Activated CD4-positive, alpha-beta T cell treated with anti-CD3 and anti-CD28 coated beads for 36 hours (primary cell): ENCODE measurements at regions of chr11 and their contacts with region 1.

Region 1: DNA sequence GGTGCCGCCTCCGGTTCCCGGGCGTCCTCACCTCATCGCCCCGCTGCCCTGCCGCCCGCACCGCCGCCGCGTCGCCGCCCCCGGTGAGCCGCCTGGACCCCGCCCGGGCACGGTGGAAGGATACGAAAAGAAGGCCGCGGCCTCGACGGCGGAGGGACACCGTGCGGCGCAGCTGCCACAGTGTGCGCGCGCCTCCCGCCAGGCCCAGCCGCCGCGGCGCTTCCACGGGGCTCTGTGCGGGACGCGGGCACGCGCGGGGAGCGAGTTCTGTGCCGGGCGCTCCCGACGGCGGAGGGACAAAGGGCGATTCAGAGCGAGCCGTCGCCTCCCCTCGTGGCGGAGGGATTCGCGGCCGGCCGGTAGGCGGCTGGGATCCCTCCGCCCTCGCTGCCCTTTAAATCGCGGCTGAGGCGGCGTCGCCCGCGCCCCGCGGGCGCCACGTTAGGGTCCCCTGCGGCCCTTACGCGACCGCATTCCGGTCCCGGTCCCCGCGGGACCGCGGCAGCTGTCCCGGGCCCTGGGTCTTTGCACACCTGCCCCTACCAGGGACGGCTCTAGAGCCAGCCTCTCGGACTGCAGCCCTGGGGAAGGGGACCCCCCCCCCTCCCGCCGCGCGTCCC is 569 bp upstream of the KMT5B start:
- DNase-seq: peak; percentile 87
- ATAC-seq: peak; percentile 41
- H3K4me3 Mint-ChIP-seq: peak overlapping the region; percentile 71
- H3K27ac Mint-ChIP-seq: no peak overlapping the region
- H3K4me1 Mint-ChIP-seq: peaks cover 47% of the 10 kb centered on the region
- H3K27me3 Mint-ChIP-seq: peaks cover 2% of the 10 kb centered on the region

Region 2: DNA sequence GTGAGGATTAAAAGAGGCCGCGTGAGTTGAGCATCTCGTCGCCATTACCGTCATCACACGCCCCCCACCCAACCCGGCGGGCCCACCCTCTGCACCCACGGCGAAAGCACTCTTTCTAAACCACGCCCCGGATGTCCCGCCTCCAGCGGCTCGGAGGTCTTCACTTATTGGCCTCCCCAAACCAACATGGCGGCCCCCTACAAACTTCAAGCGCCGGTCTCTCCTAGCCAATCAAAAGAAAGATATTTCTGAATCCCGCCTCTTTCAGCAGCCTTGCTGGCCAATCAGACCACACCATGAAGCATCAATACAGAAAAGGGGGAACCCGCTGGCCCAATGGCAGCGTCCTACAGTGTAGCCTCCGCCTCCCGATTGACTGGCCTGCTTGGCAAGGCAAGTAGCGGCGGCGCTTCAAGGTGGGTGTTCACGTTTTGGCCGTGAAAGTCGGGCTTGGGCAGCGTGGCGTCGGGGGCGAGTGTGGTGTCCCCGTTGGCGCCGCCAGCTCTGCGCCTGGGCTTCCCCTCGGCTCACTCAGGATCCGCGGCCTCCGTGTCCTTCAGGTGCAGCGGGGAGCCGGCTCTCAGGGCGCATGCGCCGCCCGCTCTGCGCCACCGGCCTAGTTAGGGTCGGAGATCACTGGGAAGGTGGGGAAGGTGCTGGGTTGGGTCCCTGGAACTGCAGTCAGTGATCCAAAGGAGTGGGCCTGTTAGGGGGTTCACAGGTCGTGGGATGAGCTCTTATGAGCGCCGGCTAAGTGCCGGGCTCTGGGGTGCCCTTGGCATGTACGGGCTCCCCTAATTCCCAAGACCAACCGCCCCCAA is 183.1 kb before region 1 on chr11 and contains the start of gene NDUFS8:
- CTCF ChIA-PET with region 1: interaction called, 3 read pairs
- POLR2A ChIA-PET with region 1: no interaction called
- intact Hi-C with region 1: loop called in 1 of 2 experiments (anchors 1 kb)
- DNase-seq: peak; percentile 97
- ATAC-seq: peak; percentile 99
- H3K4me3 Mint-ChIP-seq: peak within 1 kb of the TSS; percentile 96
- H3K27ac Mint-ChIP-seq: peak within 1 kb of the TSS; percentile 95
- H3K4me1 Mint-ChIP-seq: peaks cover 26% of the 10 kb centered on the region
- H3K27me3 Mint-ChIP-seq: no peaks in the 10 kb centered on the region
- total RNA-seq, gene NDUFS8: 108 to 113 TPM

Region 3: GRCh38 chr11:68191661-68192579 is 21.7 kb before region 1 on chr11:
- CTCF ChIA-PET with region 1: interaction called, 27 read pairs
- POLR2A ChIA-PET with region 1: no interaction called
- intact Hi-C with region 1: no loop called
- DNase-seq: no peak
- ATAC-seq: peak; percentile 80
- H3K4me3 Mint-ChIP-seq: no peak overlapping the region
- H3K27ac Mint-ChIP-seq: peak overlapping the region; percentile 64
- H3K4me1 Mint-ChIP-seq: peaks cover 49% of the 10 kb centered on the region
- H3K27me3 Mint-ChIP-seq: no peaks in the 10 kb centered on the region

Region 4: DNA sequence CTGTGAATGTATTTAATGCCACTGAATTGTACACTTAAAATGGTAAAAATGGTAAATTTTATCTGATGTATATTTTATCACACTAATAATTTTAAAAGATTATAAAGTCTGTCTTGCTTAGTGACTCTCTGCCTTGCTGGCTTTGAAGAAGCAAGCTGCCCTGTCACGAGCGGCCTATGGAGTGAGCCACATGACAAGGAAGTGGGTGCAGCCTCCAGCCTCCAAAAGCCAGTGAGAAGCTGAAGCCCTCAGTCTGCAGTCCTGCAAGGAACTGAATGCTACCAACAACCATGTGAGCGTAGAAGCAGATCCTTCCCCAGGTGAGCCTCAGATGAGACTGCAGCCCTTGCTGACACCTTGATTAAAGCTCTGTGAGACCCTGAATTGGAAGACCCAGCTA is 38.1 kb after region 1 on chr11:
- CTCF ChIA-PET with region 1: no interaction called
- POLR2A ChIA-PET with region 1: no interaction called
- intact Hi-C with region 1: no loop called
- DNase-seq: no peak
- ATAC-seq: no peak
- H3K4me3 Mint-ChIP-seq: no peak overlapping the region
- H3K27ac Mint-ChIP-seq: no peak overlapping the region
- H3K4me1 Mint-ChIP-seq: peaks cover 6% of the 10 kb centered on the region
- H3K27me3 Mint-ChIP-seq: no peaks in the 10 kb centered on the region

Region 5: DNA sequence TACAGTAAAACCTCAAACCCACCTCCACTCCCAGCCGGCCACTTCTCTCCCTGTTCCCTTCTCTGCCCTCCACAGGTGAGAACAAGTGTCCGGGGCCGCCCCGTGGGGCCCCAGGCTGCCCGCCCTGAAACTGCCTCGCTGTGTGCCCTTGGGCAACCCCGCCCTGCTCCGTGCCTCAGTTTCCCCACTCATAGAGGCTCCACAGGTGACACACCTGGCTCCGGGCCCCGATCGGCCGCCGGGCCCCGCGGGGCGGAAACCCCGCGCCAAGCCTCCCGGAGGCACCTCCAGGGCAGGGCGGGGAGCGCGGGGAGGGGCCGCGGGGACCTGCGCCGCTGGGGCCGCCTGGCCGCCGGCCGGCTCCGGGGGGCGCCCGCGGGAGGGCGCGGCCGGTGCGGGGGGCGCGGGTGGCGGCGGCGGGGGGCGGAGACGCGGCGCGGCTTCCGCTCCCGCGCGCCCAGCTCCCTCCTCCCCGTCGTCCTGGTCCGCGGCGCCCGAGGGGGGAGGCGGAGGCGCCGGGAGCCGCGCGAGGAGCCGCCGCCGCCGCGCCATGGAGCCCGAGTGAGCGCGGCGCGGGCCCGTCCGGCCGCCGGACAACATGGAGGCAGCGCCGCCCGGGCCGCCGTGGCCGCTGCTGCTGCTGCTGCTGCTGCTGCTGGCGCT is 98.6 kb after region 1 on chr11 and contains the start of gene LRP5:
- CTCF ChIA-PET with region 1: interaction called, 4 read pairs
- POLR2A ChIA-PET with region 1: no interaction called
- intact Hi-C with region 1: loop called in 1 of 2 experiments (anchors 1 kb)
- DNase-seq: peak; percentile 33
- ATAC-seq: peak; percentile 60
- H3K4me3 Mint-ChIP-seq: peak within 1 kb of the TSS; percentile 84
- H3K27ac Mint-ChIP-seq: peak within 1 kb of the TSS; percentile 83
- H3K4me1 Mint-ChIP-seq: peaks cover 21% of the 10 kb centered on the region
- H3K27me3 Mint-ChIP-seq: peaks cover 3% of the 10 kb centered on the region
- total RNA-seq, gene LRP5: 11.7 to 13.6 TPM

Region 6: DNA sequence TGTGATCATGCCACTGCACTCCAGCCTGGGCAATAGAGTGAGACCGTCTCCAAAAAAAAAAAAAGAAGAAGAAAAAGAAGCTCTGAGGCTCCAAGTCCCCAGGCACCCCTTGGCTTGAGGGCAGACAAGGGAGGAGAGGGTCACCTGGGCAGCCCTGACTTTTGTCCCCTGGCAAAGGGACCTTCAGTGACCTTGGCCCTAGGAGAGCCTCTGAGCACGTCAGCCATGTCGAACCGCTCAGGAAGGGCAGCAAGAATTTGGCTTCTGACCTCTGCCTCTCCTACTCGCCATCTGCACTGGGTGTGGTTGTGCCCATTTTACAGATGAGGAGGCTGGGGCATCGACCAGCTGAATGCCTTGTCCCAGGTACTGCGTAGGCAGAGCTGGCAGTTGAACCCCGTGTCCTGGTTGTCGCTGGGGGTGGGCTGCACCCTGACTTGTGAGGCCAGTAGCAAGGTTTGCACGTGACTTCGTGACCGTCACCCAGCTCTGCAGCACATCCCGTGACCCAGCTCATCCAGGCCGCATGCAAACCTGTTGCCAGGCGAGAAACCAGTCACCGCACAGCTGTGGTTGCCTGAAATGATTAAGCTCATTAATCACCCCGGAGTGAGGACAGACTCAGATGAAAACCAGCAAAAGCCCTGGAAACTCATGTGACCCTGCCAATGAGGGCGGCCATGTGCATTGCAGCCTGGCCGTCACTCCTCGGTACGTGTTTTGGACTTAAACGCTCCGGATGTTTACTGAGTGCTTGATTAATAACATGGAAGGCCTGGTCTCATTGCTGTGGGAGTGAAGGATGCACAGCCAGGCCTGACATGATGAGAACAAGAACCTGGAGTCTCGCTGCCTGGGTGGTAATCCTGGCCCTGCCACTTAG is 199.2 kb after region 1 on chr11:
- CTCF ChIA-PET with region 1: no interaction called
- POLR2A ChIA-PET with region 1: no interaction called
- intact Hi-C with region 1: no loop called
- DNase-seq: peak; percentile 65
- ATAC-seq: peak; percentile 80
- H3K4me3 Mint-ChIP-seq: no peak overlapping the region
- H3K27ac Mint-ChIP-seq: no peak overlapping the region
- H3K4me1 Mint-ChIP-seq: peaks cover 7% of the 10 kb centered on the region
- H3K27me3 Mint-ChIP-seq: no peaks in the 10 kb centered on the region

Region 7: GRCh38 chr11:68677432-68677831 is 463.8 kb after region 1 on chr11:
- CTCF ChIA-PET with region 1: no interaction called
- POLR2A ChIA-PET with region 1: no interaction called
- intact Hi-C with region 1: no loop called
- DNase-seq: no peak
- ATAC-seq: no peak
- H3K4me3 Mint-ChIP-seq: no peak overlapping the region
- H3K27ac Mint-ChIP-seq: no peak overlapping the region
- H3K4me1 Mint-ChIP-seq: no peaks in the 10 kb centered on the region
- H3K27me3 Mint-ChIP-seq: peaks cover 8% of the 10 kb centered on the region

Region 8: DNA sequence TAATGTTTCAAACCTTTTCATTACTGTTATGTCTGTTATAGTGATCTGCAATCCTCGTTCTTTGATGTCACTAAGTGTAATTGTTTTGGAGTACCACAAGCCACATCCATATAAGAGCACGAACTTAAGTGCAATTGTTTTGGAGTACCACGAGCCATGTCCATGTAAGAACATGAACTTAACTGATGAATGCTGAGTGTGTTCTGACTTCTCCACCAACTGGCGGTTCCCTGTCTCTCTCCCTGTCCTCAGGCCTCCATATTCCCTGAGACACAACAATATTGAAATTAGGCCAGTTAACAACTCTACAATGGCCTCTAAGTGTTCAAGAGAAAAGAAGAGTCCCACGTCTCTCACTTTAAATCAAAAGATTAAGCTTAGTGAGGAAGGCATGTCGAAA is 514.1 kb after region 1 on chr11:
- CTCF ChIA-PET with region 1: no interaction called
- POLR2A ChIA-PET with region 1: no interaction called
- intact Hi-C with region 1: no loop called
- DNase-seq: no peak
- ATAC-seq: no peak
- H3K4me3 Mint-ChIP-seq: no peak overlapping the region
- H3K27ac Mint-ChIP-seq: no peak overlapping the region
- H3K4me1 Mint-ChIP-seq: no peaks in the 10 kb centered on the region
- H3K27me3 Mint-ChIP-seq: no peaks in the 10 kb centered on the region

Region 9: DNA sequence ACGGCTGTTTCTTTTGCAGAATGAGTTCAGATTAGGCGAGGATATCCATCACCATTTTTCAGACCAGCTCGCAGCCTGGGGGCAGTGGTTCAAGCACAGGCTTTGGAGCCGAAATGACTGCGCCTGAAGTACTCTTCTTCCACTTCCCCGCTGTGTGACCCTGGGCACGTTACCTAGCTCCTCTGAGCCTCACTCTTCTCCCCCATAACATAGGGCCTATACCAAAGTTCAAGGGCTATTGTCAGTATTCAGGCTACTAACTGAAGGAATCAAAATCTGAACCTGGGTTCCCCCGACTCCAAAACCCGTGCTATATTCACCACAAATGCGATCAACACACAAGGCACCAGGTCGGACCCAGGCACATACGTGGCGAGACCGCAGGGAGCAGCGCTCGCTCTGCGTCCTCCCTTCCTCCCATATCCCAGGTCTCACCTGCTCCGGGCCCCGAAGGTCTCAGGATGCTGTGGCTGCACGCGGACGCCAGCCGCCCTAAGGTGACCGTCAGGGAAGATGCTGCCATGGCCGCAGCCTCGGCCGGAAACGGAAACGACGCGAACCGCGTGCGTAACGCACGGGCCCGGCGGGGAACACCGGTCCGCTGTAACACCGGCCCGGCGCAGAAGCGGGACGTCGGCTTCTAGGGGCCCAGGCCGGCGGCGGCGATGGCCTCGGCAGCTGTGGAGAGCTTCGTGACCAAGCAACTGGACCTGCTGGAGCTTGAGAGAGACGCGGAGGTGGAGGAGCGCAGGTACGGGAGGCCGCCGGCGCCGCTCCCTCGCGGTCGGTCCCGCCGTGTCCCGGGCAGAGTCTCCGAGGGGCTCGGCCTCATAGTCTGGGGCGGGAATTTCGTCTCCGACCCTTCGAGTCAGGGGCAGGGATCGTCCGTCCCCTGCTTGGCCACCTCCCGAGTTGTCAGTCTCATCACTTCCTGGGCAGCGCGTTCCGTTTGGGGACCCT is 689.9 kb after region 1 on chr11 and contains the starts of genes IGHMBP2 and MRPL21:
- CTCF ChIA-PET with region 1: interaction called, 3 read pairs
- POLR2A ChIA-PET with region 1: no interaction called
- intact Hi-C with region 1: loop called in 1 of 2 experiments (anchors 2 kb)
- DNase-seq: peak; percentile 93
- ATAC-seq: peak; percentile 94
- H3K4me3 Mint-ChIP-seq: peak within 1 kb of the TSS; percentile 93
- H3K27ac Mint-ChIP-seq: peak within 1 kb of the TSS; percentile 91
- H3K4me1 Mint-ChIP-seq: peaks cover 29% of the 10 kb centered on the region
- H3K27me3 Mint-ChIP-seq: no peaks in the 10 kb centered on the region
- total RNA-seq, gene IGHMBP2: 20.9 to 25.4 TPM
- total RNA-seq, gene MRPL21: 100 to 102 TPM